ENCODE measurements at regions of chr18 and their contacts with region 1.

Region 1: DNA sequence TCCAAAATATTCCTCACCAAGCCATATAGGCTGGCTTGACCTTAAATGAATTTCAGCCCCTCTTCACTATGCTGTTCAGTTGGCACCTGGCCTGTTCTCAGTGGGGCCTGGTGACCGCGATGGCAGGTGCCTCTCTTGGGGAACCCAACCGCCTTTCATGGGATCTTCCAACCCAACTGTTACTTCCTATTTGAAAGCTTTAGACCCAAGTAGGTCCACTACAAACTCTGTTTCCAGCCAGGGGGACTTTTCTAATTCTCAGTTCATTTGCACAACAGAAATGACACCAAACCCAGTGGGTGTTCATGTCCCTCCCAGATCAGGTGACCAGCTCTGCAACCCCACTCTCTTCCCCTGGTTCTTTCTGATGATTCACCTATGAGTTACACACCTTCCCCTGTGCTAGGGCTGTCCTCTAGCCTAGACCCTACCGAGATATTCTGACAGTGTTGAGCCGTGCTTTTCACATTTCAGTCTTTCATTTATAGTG is 35.6 kb upstream of the NDUFV2 start:
- DNase-seq: no peak
- ATAC-seq: peak; percentile 72
- H3K4me3 Mint-ChIP-seq: peak overlapping the region; percentile 62
- H3K27ac Mint-ChIP-seq: peak overlapping the region; percentile 91
- H3K4me1 Mint-ChIP-seq: peaks cover 73% of the 10 kb centered on the region
- H3K27me3 Mint-ChIP-seq: no peaks in the 10 kb centered on the region
- CTCF ChIP-seq: no peak

Region 2: GRCh38 chr18:8601277-8602032 is 465.4 kb before region 1 on chr18:
- CTCF ChIA-PET with region 1: no interaction called
- POLR2A ChIA-PET with region 1: interaction called, 3 read pairs
- intact Hi-C with region 1: loop called (anchors 5 kb)
- DNase-seq: no peak
- ATAC-seq: peak; percentile 75
- H3K4me3 Mint-ChIP-seq: peak overlapping the region; percentile 40
- H3K27ac Mint-ChIP-seq: peak overlapping the region; percentile 87
- H3K4me1 Mint-ChIP-seq: peaks cover 57% of the 10 kb centered on the region
- H3K27me3 Mint-ChIP-seq: no peaks in the 10 kb centered on the region
- CTCF ChIP-seq: no peak

Region 3: DNA sequence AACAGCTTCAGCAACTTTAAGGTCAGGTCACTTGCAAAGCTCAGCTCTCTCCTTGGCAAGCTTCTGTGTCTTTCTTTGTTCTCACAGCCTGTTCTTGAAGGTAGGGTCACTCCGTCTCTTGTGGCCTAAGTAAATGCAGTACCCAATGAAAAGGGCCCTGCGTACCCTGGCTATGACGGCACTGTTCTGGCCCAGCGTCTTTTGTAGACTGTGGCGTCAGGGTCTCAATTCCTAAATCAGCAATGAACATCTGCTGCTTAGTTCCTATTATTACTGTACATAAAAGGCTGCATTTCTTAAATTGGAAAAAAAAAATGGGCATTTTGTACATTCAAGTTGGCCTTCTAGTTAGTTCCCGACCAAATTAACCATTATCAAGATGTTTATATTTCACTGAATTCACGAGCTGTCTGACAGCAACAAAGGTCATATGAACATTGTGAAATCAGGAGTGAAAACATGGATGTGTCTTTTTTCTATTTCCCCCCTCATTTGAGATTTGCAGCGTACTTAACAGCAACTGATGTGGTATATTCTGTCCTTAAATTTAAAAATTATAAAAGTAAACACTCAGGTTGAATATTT is 378.6 kb before region 1 on chr18:
- CTCF ChIA-PET with region 1: no interaction called
- POLR2A ChIA-PET with region 1: interaction called, 10 read pairs
- intact Hi-C with region 1: no loop called
- DNase-seq: no peak
- ATAC-seq: no peak
- H3K4me3 Mint-ChIP-seq: no peak overlapping the region
- H3K27ac Mint-ChIP-seq: no peak overlapping the region
- H3K4me1 Mint-ChIP-seq: no peaks in the 10 kb centered on the region
- H3K27me3 Mint-ChIP-seq: no peaks in the 10 kb centered on the region
- CTCF ChIP-seq: no peak

Region 4: DNA sequence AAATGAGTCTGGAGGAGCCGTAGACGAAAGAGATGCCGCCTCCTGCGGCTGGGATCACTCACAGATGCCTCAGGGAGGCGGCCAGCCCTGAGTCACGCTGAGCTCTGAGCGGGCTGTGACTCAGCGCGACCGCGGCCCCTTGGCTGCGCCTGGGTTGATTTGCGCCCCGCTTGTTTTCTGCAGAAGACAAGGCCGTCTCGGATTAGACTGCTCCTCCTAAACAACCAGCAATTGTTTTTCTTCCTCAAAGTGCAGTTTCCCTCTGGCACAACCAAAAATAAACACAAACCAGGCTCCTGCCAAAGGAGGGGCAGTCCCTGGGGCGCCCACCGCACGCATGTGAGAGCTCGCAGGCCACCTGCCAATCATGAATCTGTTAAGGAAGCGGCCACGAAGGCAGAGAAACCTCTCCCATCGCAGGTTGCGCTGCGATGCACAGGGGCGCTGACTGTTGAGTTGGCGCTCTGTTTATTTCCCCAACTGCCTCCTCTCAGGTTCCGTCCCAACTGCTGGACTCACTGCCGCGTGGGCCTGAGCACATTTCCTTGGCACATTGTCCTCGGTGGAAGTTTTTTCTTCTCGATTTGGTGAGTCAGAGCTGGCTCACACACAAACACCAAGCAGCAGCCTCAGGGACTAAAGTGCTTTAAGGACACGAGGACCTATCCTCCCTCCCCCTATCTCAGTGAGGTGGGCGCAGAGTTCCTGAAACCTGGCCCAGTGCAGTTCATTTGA is 49.5 kb before region 1 on chr18:
- CTCF ChIA-PET with region 1: no interaction called
- POLR2A ChIA-PET with region 1: interaction called, 5 read pairs
- intact Hi-C with region 1: loop called (anchors 2 kb)
- DNase-seq: peak; percentile 50
- ATAC-seq: peak; percentile 93
- H3K4me3 Mint-ChIP-seq: peak overlapping the region; percentile 82
- H3K27ac Mint-ChIP-seq: peak overlapping the region; percentile 50
- H3K4me1 Mint-ChIP-seq: peaks cover 11% of the 10 kb centered on the region
- H3K27me3 Mint-ChIP-seq: no peaks in the 10 kb centered on the region
- CTCF ChIP-seq: no peak

Region 5: GRCh38 chr18:9117980-9118841 is 51.3 kb after region 1 on chr18:
- CTCF ChIA-PET with region 1: no interaction called
- POLR2A ChIA-PET with region 1: interaction called, 22 read pairs
- intact Hi-C with region 1: no loop called
- DNase-seq: no peak
- ATAC-seq: peak; percentile 35
- H3K4me3 Mint-ChIP-seq: peak overlapping the region; percentile 86
- H3K27ac Mint-ChIP-seq: peak overlapping the region; percentile 99
- H3K4me1 Mint-ChIP-seq: peaks cover 84% of the 10 kb centered on the region
- H3K27me3 Mint-ChIP-seq: no peaks in the 10 kb centered on the region
- CTCF ChIP-seq: no peak

Region 6: GRCh38 chr18:9792565-9793245 is 725.8 kb after region 1 on chr18:
- CTCF ChIA-PET with region 1: no interaction called
- POLR2A ChIA-PET with region 1: no interaction called
- intact Hi-C with region 1: no loop called
- DNase-seq: no peak
- ATAC-seq: peak; percentile 56
- H3K4me3 Mint-ChIP-seq: no peak overlapping the region
- H3K27ac Mint-ChIP-seq: no peak overlapping the region
- H3K4me1 Mint-ChIP-seq: no peaks in the 10 kb centered on the region
- H3K27me3 Mint-ChIP-seq: no peaks in the 10 kb centered on the region
- CTCF ChIP-seq: no peak

Measured in activated B cell treated with CpG ODN at 0.5 μM for 24 hours (primary cell).